ENCODE measurements at regions of chr7 and their contacts with region 1.

Region 1: DNA sequence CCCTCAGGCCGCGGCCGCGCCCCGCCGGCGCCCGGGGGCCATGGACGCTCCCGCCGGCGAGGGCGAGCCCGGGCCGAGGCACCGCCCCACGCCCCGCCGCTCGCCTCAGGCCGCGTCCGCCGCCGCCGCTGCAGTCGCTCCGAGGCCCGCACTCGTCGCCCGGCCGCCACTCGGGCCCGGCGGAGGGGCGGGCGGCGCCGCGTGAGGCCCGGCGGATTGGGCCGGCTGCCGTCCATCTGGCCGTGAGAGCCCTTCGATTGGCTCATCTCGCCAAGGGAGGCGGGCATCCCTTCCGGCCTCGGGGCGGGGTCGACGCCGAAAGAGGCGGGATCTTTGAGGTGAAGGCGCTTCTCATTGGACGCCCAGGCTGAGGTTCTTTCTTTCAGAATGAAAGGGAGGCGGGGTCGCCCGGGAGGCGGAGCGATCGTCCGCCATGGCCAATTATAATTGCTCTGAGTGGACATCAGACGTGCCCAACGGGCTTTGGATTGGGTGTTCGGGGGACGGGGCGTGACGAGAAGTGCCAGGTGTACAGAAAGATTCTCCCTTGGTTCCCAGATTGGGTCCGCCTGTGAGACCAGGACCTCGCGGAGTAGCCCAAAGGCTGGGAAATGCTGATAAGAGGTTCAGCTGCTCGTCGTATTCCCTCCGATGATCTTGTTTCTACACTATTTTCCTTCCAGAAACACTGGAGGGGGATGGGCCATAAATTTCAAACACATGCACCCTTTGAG is at the start of gene GNA12:
- H3K4me3 ChIP-seq: peak within 1 kb of the TSS; percentile 64
- H3K27ac ChIP-seq: peak within 1 kb of the TSS; percentile 75; the same call in 1 of the 2 replicates
- H3K4me1 ChIP-seq: no peaks in the 10 kb centered on the region
- CTCF ChIP-seq: no peak

Region 2: GRCh38 chr7:2572101-2572842 is 272.1 kb before region 1 on chr7:
- CTCF ChIA-PET with region 1: no interaction called
- POLR2A ChIA-PET with region 1: no interaction called
- H3K4me3 ChIP-seq: no peak overlapping the region
- H3K27ac ChIP-seq: no peak overlapping the region
- H3K4me1 ChIP-seq: no peaks in the 10 kb centered on the region
- CTCF ChIP-seq: no peak

Region 3: GRCh38 chr7:2921653-2922347 is 77.5 kb after region 1 on chr7:
- CTCF ChIA-PET with region 1: no interaction called
- POLR2A ChIA-PET with region 1: no interaction called
- H3K4me3 ChIP-seq: no peak overlapping the region
- H3K27ac ChIP-seq: no peak overlapping the region
- H3K4me1 ChIP-seq: no peaks in the 10 kb centered on the region
- CTCF ChIP-seq: no peak

Region 4: DNA sequence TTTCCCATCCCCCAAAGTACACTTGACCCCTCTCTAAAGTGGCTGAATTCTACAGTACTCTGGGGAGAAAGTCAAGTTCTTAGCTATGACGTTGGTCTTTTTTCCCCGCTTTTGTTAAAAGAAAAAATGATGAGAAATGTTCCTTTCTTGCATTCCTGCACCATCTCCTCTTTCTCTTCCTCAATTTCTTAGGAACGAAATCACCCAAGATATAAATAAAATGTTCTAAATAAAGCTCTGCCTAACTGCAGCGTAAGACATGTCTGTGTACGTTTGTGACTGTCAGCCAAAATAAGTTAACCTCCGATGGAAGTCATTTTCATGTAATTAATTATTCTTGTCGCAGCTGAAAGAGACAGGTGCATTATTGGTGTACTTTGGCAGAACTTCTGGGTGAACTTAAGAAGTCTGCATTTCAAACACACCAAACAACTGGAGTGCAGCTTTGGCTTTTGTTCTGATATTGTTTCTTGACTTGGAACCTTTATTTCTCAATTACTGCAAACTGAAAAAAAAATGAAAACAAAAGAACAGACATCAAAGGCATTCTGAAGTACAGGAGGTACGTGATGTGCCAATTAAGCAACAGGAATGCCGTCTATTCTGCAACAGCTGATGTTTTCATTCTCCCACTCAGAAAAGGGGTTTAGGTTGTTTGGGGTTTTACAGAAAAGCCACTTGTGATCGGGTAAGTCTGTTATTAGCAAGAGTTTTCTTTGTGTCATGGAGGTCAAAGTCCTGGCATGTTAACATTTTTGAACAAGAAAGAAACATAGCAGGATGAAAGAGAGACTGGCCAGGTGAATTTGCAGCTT is 374.3 kb after region 1 on chr7:
- CTCF ChIA-PET with region 1: no interaction called
- POLR2A ChIA-PET with region 1: interaction called, 10 read pairs
- H3K4me3 ChIP-seq: no peak overlapping the region
- H3K27ac ChIP-seq: no peak overlapping the region
- H3K4me1 ChIP-seq: no peaks in the 10 kb centered on the region
- CTCF ChIP-seq: no peak